ENCODE measurements at regions of chr6 and their contacts with region 1.

Region 1: DNA sequence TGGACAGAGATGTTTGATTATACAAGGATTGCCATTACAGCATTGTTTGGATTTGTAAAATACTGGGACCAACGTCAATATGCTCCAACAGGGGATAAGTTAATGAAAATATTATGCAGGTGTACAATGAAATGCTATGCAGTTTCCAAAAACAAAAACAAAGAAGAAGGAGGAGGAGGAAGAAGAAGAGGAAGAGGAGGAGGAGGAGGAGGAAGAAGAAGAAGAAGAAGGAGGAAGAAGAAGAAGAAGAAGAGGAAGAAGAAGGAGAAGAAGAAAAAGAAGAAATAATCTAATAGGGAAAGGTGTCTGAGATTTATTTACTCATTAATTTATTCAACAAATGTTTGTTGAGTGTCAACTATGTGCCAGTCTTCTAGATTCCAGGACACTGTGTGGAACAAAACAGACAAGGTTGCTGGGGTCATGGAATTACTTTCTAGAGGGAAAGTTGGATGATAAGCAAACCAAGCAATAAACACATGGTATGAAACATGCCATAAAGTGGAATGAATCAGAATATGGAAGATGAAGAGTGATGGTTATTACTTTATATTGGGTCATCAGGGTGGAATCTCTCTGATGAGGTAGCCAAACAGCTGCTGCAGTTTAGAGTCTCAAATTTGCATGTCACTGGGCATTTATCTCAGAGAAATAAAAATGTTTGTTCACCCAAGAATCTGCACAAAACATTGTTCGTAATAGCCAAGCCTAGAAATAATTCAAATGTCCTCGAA is 6.3 kb upstream of the TRIM27 start:
- DNase-seq: no peak
- ATAC-seq: no peak
- H3K4me3 ChIP-seq: no peak overlapping the region
- H3K27ac ChIP-seq: no peak overlapping the region
- H3K4me1 ChIP-seq: peaks cover 0 to 1% (median 0%) of the 10 kb centered on the region in 12 donors
- H3K27me3 ChIP-seq: peaks cover 0 to 21% (median 0%) of the 10 kb centered on the region in 9 donors
- CTCF ChIP-seq: no peak
- POLR2A ChIP-seq: no peak

Region 2: GRCh38 chr6:28856620-28857005 is 73.4 kb before region 1 on chr6:
- intact Hi-C with region 1: loop called in 1 of 10 experiments (anchors 10 kb)
- DNase-seq: no peak
- ATAC-seq: no peak
- H3K4me3 ChIP-seq: no peak overlapping the region
- H3K27ac ChIP-seq: no peak overlapping the region
- H3K4me1 ChIP-seq: no peaks in the 10 kb centered on the region
- H3K27me3 ChIP-seq: peaks cover 0 to 19% (median 0%) of the 10 kb centered on the region in 9 donors
- CTCF ChIP-seq: no peak
- POLR2A ChIP-seq: no peak

Region 3: DNA sequence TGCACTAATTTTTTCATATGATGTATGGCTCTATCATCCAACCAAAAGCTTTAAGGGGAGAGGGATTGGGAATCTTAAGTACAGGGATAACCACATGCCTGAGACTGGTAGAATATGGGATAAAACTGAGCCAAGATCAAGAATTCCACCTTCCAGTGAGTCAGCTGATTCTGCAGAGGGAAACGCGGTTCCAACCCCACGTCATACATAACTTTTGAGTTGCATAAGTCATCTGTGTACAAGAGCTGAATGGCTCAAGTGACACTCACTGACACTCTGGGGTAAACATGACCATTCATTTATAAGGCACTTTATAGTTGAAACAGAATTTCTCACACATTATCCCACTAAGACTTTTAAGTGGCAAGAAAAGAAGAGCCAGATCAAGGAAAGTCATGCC is 22.7 kb before region 1 on chr6:
- intact Hi-C with region 1: no loop called
- DNase-seq: no peak
- ATAC-seq: peak in 2 of 4 donors; percentile 43 to 56
- H3K4me3 ChIP-seq: no peak overlapping the region
- H3K27ac ChIP-seq: peak overlapping the region in 1 of 12 donors; percentile 34
- H3K4me1 ChIP-seq: peaks cover 0 to 19% (median 0%) of the 10 kb centered on the region in 12 donors
- H3K27me3 ChIP-seq: no peaks in the 10 kb centered on the region
- CTCF ChIP-seq: no peak
- POLR2A ChIP-seq: no peak

Region 4: GRCh38 chr6:29301401-29301800 is 371.3 kb after region 1 on chr6 and contains the start of gene OR14J1:
- intact Hi-C with region 1: no loop called
- DNase-seq: no peak
- ATAC-seq: no peak
- H3K4me3 ChIP-seq: no peak within 1 kb of the TSS
- H3K27ac ChIP-seq: no peak within 1 kb of the TSS
- H3K4me1 ChIP-seq: no peaks in the 10 kb centered on the region
- H3K27me3 ChIP-seq: no peaks in the 10 kb centered on the region
- CTCF ChIP-seq: no peak
- POLR2A ChIP-seq: no peak
- total RNA-seq, gene OR14J1: not detected